ENCODE measurements at regions of chr2 and their contacts with region 1.

Region 1: GRCh38 chr2:210252699-210253606 is 27.7 kb upstream of the ACADL start:
- DNase-seq: no peak

Region 2: DNA sequence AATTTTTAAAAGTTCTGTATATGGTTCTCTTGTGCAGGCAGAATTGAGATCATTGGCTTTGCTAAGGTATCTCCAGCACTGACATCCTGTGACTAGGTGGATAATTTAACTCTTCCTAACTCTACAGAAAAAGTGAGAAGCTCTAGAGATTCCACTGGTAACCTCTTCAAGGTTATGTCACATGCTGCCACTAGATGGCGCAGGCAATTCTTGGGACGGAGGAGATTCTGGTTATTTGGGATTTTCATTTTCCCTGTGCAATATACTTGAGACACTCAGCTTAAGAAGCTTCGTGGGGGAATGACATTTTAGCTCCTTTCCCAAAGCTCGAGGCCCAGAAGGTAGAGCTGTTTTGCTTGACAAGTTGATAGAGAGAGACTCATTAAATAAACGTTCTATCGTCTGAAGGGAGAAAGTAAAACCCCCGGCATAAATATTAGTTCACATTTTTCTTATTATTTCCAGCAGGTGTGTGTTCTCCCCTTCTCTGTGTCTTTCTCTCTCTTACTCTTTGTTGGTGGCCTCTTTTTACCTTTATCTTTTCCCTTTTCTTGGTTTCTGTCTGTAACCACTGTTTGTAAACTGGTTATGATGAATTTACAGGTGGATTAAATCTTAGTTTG is 250.2 kb after region 1 on chr2:
- CTCF ChIA-PET with region 1: interaction called, 10 read pairs
- POLR2A ChIA-PET with region 1: no interaction called
- DNase-seq: peak; percentile 57

Measured in HEK293T (cell line).